ENCODE measurements at regions of chr21 and their contacts with region 1.

Region 1: GRCh38 chr21:43758111-43758641 is 17.9 kb downstream of the CSTB start:
- DNase-seq: no peak
- H3K4me3 ChIP-seq: peak overlapping the region in 8 of 59 donors; percentile 1 to 30 (median 16)
- H3K27ac ChIP-seq: peak overlapping the region in 55 of 59 donors; percentile 18 to 88 (median 70)
- H3K27me3 ChIP-seq: no peaks in the 10 kb centered on the region
- CTCF ChIP-seq: no peak

Region 2: GRCh38 chr21:43687566-43688286 is 70.5 kb before region 1 on chr21:
- intact Hi-C with region 1: no loop called
- DNase-seq: peak in 1 of 10 donors; percentile 31
- H3K4me3 ChIP-seq: no peak overlapping the region
- H3K27ac ChIP-seq: peak overlapping the region in 42 of 59 donors; percentile 7 to 81 (median 50)
- H3K27me3 ChIP-seq: no peaks in the 10 kb centered on the region
- CTCF ChIP-seq: peak in 1 of 56 donors; percentile 13

Region 3: DNA sequence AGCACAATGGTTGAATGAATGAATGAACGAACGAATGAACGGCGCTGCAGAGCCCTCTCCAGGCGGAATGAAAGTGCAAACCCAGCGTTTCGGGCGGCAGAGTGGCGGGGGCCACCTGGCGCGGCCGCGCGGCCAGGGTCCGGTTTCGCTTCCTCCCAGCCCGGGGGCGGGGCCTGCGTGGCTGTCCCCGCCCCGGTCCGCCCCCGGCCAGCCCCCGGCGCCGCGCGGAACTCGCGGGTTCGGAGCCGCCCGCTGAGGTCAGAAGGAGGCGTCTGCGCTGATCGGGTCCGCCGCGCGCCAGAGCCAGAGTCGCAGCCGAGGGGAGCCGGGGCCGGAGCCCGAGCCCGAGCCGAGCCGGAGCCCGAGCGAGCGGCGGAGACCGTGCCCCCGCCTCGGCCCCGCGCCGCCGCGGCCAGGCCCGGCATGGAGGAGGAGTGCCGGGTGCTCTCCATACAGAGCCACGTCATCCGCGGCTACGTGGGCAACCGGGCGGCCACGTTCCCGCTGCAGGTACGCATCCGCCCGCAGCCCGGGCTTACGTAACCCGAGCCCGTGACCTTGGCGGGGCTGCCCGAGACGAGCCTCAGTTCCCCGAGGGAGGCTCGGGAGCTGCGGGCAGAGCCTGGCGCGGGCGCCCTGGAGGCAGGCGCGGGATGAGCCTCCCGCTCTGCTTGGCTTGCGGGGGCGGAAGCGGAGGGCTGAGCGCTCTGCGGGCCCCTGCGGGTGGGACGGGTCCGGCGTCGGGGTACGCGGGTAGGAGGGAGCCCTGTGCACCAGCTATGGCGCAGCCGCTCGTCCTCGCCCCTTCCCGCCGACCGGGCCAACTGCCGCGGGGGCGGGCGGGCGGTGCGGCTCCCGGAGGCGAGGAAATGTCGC is 39.1 kb before region 1 on chr21 and contains the start of gene PDXK:
- intact Hi-C with region 1: loop called in 1 of 2 experiments (anchors 5 kb)
- DNase-seq: peak; percentile 67 to 91 (median 84)
- H3K4me3 ChIP-seq: peak within 1 kb of the TSS; percentile 56 to 99 (median 94)
- H3K27ac ChIP-seq: peak within 1 kb of the TSS; percentile 17 to 98 (median 92)
- H3K27me3 ChIP-seq: no peaks in the 10 kb centered on the region
- CTCF ChIP-seq: peak in 26 of 56 donors; percentile 9 to 54 (median 26)
- total RNA-seq, gene PDXK: 169 to 469 (median 338) TPM

Measured in dorsolateral prefrontal cortex (tissue), 120 donors.